Activated B cell treated with CpG ODN at 0.5 μM for 24 hours (primary cell): ENCODE measurements at regions of chr14 and their contacts with region 1.

Region 1: GRCh38 chr14:54440873-54441868 is at the start of gene CNIH1:
- DNase-seq: peak; percentile 98
- ATAC-seq: peak; percentile 95
- H3K4me3 Mint-ChIP-seq: peak within 1 kb of the TSS; percentile 86
- H3K27ac Mint-ChIP-seq: peak within 1 kb of the TSS; percentile 88
- H3K4me1 Mint-ChIP-seq: peaks cover 50% of the 10 kb centered on the region
- H3K27me3 Mint-ChIP-seq: peaks cover 3% of the 10 kb centered on the region
- CTCF ChIP-seq: peak; percentile 40
- total RNA-seq, gene CNIH1: 40.6 and 43.5 TPM in 2 replicates

Region 2: GRCh38 chr14:54241517-54241916 is 199.7 kb before region 1 on chr14:
- CTCF ChIA-PET with region 1: no interaction called
- POLR2A ChIA-PET with region 1: no interaction called
- intact Hi-C with region 1: no loop called
- DNase-seq: no peak
- ATAC-seq: no peak
- H3K4me3 Mint-ChIP-seq: no peak overlapping the region
- H3K27ac Mint-ChIP-seq: no peak overlapping the region
- H3K4me1 Mint-ChIP-seq: no peaks in the 10 kb centered on the region
- H3K27me3 Mint-ChIP-seq: no peaks in the 10 kb centered on the region
- CTCF ChIP-seq: no peak

Region 3: GRCh38 chr14:54366736-54367735 is 74.1 kb before region 1 on chr14:
- CTCF ChIA-PET with region 1: no interaction called
- POLR2A ChIA-PET with region 1: no interaction called
- intact Hi-C with region 1: loop called (anchors 1 kb)
- DNase-seq: no peak
- ATAC-seq: peak; percentile 65
- H3K4me3 Mint-ChIP-seq: no peak overlapping the region
- H3K27ac Mint-ChIP-seq: no peak overlapping the region
- H3K4me1 Mint-ChIP-seq: no peaks in the 10 kb centered on the region
- H3K27me3 Mint-ChIP-seq: peaks cover 15% of the 10 kb centered on the region
- CTCF ChIP-seq: no peak

Region 4: DNA sequence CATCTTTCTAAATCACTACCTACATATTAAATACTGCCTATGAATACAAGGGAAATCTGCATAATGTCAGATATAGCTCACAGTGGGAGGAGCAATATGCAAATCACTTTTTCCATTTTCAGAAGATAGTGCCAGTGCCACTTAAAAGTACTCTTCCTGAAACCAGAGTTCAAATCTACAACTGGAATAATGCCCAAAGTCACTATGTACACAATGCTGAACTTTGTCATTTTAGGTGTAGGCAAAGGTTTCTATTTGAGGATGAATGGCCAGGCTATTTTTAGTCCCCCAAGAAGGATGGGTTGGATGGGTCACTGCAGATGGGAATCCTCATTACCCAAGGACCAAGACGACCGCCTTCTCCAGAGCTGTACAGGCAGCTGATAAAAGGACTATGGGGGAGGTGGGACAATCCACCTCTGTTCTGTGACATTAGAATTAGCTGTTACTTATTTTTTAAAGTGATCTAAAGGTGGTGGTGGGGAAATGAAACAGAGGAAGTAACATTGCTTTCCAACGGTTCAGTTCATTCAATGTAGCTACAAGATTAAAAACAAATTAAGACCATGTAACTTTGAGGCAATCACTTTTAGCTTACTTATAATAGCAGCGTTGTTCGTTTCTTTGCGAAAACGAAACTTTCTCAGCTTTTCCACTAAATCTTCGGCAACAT is 42.0 kb after region 1 on chr14:
- CTCF ChIA-PET with region 1: no interaction called
- POLR2A ChIA-PET with region 1: interaction called, 3 read pairs
- intact Hi-C with region 1: loop called (anchors 1 kb)
- DNase-seq: no peak
- ATAC-seq: peak; percentile 74
- H3K4me3 Mint-ChIP-seq: peak overlapping the region; percentile 74
- H3K27ac Mint-ChIP-seq: peak overlapping the region; percentile 74
- H3K4me1 Mint-ChIP-seq: peaks cover 70% of the 10 kb centered on the region
- H3K27me3 Mint-ChIP-seq: no peaks in the 10 kb centered on the region
- CTCF ChIP-seq: no peak

Region 5: DNA sequence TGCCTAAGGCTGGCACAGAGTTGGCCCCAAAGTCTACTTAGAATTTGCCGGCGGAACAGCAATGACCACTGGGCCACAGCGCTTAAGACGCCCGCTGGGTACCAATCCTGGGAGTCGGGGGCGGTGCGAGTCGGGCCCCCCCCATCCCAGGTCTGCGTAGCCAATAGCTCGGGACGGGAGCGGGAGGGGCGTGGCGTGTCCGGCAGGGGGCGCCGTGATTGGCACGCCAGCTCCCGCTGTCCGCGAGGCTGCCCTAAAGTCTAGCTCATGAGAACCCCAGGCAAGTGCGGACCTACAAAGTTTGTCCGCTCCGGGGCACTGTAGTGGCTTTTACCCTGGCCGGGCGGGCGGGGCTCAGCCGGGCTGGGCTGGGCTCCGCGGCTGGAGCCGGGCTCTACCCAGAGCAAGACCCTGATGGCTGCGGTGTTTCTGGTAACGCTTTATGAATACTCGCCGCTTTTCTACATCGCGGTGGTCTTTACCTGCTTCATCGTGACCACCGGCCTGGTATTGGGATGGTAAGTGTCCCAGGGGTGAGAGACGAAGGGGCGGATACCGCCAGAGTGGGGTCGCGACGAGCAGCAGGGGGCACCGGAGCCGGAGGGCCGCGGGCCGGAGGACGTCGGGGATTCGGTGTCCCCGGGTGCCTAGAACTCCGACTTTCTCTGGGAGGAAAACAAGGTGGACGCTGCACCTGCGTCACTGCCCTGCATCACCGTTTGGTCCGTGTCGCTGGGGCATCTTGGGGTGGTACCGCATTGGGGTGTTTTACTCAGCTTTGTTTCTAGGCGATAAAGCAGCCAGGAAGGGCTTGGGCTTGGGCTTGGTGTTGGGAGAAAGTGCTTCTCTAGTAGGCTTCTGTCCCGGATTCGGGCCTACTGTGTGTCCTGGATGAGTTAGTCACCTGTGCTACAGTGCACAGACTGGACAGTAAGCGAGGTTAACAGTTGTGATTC is 68.7 kb after region 1 on chr14 and contains the start of gene CGRRF1:
- CTCF ChIA-PET with region 1: no interaction called
- POLR2A ChIA-PET with region 1: no interaction called
- intact Hi-C with region 1: loop called (anchors 1 kb)
- DNase-seq: peak; percentile 98
- ATAC-seq: peak; percentile 98
- H3K4me3 Mint-ChIP-seq: peak within 1 kb of the TSS; percentile 95
- H3K27ac Mint-ChIP-seq: peak within 1 kb of the TSS; percentile 89
- H3K4me1 Mint-ChIP-seq: peaks cover 41% of the 10 kb centered on the region
- H3K27me3 Mint-ChIP-seq: no peaks in the 10 kb centered on the region
- CTCF ChIP-seq: no peak
- total RNA-seq, gene CGRRF1: 11.9 and 14.1 TPM in 2 replicates

Region 6: GRCh38 chr14:56117765-56118610 is 1676.8 kb after region 1 on chr14 and contains the start of gene PELI2:
- CTCF ChIA-PET with region 1: no interaction called
- POLR2A ChIA-PET with region 1: no interaction called
- intact Hi-C with region 1: loop called (anchors 5 kb)
- DNase-seq: peak; percentile 83
- ATAC-seq: peak; percentile 83
- H3K4me3 Mint-ChIP-seq: peak within 1 kb of the TSS; percentile 95
- H3K27ac Mint-ChIP-seq: peak within 1 kb of the TSS; percentile 93
- H3K4me1 Mint-ChIP-seq: peaks cover 54% of the 10 kb centered on the region
- H3K27me3 Mint-ChIP-seq: peaks cover 2% of the 10 kb centered on the region
- CTCF ChIP-seq: no peak
- total RNA-seq, gene PELI2: 5.5 and 6.1 TPM in 2 replicates